Heart right ventricle (tissue), 16 donors: ENCODE measurements at regions of chr1 and their contacts with region 1.

Region 1: GRCh38 chr1:203172128-203173010 is 3.3 kb downstream of the MYBPH start:
- DNase-seq: peak; percentile 56
- ATAC-seq: peak; percentile 57 to 82 (median 72)
- H3K4me3 ChIP-seq: no peak overlapping the region
- H3K27ac ChIP-seq: no peak overlapping the region
- H3K4me1 ChIP-seq: peaks cover 0 to 16% (median 0%) of the 10 kb centered on the region in 9 donors
- H3K27me3 ChIP-seq: peaks cover 0 to 4% (median 0%) of the 10 kb centered on the region in 7 donors
- CTCF ChIP-seq: peak; percentile 62 to 87 (median 80)

Region 2: DNA sequence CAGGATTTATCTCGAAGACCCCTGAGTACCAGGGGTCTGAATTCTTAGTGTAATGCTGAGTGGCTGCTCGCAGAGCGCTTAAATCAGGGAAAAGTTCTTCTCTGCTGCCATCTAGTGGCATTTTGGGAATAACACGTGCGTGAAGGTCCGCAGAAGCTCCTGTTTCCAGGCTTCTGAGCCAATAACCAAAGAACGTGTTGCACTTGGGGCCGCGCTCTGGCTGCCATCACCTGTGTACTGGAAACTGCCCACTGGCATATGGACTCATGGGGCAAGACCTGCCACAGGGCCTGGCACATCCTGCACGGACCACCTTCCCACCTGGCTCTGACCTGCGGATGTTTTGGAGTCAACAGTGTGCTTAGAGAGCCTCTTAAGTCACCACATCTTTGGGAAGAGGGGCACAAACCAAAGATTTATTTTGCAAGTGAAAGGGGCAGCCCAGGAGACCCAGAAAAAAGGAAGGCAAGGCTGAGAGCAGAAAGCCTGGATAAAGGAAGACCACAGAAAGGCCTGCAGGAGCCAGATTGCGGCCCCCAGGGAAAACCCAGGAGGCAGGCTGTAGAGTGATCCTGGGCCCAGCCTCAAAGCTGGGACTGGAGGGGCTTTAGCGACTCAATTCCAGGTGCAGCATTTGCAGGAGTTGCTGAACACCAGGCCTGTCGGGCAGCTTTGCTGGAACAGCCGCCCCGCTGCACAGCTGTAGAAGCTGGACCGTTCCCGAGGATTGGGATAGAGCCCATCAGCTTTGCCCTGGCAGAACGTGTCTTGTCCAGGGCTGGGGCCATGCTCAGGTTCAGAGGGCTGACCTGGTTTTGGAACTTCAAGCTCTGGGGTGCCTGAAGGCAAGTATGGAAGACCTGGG is 44.1 kb after region 1 on chr1:
- intact Hi-C with region 1: loop called in 1 of 10 experiments (anchors 5 kb)
- DNase-seq: peak in 1 of 2 donors; percentile 58
- ATAC-seq: peak; percentile 55 to 88 (median 76)
- H3K4me3 ChIP-seq: no peak overlapping the region
- H3K27ac ChIP-seq: no peak overlapping the region
- H3K4me1 ChIP-seq: peaks cover 0 to 15% (median 0%) of the 10 kb centered on the region in 9 donors
- H3K27me3 ChIP-seq: peaks cover 0 to 16% (median 11%) of the 10 kb centered on the region in 7 donors
- CTCF ChIP-seq: peak; percentile 75 to 91 (median 82)